ENCODE measurements at regions of chr6 and their contacts with region 1.

Region 1: GRCh38 chr6:83057705-83058321 is 7.8 kb downstream of the UBE3D start:
- DNase-seq: peak in 9 of 10 donors; percentile 22 to 93 (median 62)

Region 2: GRCh38 chr6:82251942-82252341 is 805.9 kb before region 1 on chr6:
- intact Hi-C with region 1: loop called (anchors 2 kb)
- DNase-seq: no peak

Measured in posterior cingulate gyrus (tissue), 11 donors.